ENCODE measurements at regions of chr6 and their contacts with region 1.

Region 1: GRCh38 chr6:47309291-47310130 is at the start of gene TNFRSF21:
- DNase-seq: peak; percentile 87 to 94 (median 93)
- H3K4me3 ChIP-seq: peak within 1 kb of the TSS; percentile 71 to 90 (median 84)
- H3K27ac ChIP-seq: no peak within 1 kb of the TSS
- H3K4me1 ChIP-seq: peaks cover 9 to 18% (median 13%) of the 10 kb centered on the region in 4 experiments
- H3K27me3 ChIP-seq: no peaks in the 10 kb centered on the region

Region 2: DNA sequence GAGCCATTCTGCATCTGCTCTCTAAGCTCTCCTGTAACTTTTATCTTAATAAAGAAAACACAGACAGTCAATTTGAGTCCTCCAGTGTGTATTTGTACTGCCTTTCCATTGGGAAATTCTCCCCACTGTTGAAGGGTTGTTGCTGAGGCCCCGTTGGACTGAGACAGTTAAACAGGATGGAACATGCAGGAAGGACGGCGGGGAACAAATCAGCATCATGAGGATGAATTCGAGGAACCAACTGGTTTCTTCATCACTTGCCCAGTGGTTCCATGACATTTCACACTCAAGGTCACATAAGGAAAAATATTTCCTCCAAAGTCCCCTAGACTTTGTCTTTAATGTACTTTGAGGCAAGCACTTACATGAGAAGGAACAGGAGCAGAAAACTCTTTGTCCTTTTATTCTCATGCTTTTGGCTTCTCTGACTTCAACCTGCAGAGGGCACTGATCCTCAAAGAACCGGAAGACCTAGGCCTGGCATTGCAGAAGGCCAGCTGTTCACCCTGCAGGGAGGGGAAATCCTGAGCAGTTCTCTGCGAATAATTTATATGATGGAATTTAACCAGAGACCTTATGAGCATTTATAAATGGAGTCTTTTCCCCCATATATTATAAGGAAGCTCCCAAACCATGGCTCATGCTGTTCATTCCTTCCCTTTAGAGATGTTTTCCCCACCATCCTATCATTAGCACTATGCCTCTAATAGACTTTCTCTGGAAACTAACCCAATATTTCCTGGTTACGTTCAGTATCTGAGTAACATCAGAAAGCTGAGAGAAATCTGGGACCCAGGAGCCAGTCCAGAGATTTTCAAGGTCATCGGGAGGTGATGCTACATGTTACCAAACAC is 212.2 kb before region 1 on chr6:
- CTCF ChIA-PET with region 1: interaction called, 30 read pairs
- POLR2A ChIA-PET with region 1: no interaction called
- DNase-seq: peak; percentile 74 to 90 (median 90)
- H3K4me3 ChIP-seq: no peak overlapping the region
- H3K27ac ChIP-seq: no peak overlapping the region
- H3K4me1 ChIP-seq: peaks cover 0 to 22% (median 17%) of the 10 kb centered on the region in 4 experiments
- H3K27me3 ChIP-seq: no peaks in the 10 kb centered on the region

Region 3: DNA sequence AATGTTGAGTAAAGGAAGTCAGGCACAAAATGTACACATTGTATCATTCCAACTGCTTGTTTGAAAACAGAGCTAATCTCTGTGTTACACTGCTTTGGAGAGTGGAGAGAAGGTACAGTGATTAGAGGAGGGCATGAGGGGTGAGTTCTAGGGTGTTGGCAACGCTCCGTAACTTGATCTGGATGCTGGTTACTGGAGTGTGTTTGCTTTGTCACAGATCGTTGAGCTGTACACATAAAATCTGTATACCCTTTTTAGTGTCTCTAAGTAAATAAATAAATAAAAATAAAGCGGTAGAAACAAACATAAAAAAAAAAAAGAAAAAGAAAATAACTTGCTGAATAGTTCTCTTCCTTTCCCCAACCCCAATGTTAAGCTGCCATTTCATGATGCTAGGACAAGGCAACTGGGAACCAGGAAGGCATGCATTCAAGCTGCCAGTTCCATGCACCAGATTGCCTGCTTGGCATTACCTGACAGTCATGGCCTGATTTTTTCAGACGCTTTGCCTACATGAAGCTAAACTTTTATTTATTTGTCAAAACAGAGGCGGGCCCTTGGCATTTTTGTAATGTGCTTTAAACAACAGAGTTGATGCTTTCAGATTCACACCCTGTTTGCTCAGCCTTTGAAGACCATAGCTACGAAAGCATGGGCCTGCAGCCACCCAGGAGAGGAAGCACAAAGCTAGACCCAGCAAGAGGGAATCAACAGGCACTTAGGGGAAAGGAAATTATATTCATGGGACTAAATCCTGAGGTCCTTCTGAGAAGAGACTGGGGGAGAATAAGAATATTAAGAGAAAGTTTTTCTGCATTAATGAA is 21.0 kb before region 1 on chr6:
- CTCF ChIA-PET with region 1: no interaction called
- POLR2A ChIA-PET with region 1: no interaction called
- DNase-seq: no peak
- H3K4me3 ChIP-seq: no peak overlapping the region
- H3K27ac ChIP-seq: no peak overlapping the region
- H3K4me1 ChIP-seq: no peaks in the 10 kb centered on the region
- H3K27me3 ChIP-seq: no peaks in the 10 kb centered on the region

Region 4: GRCh38 chr6:47571488-47571887 is 262.0 kb after region 1 on chr6:
- CTCF ChIA-PET with region 1: no interaction called
- POLR2A ChIA-PET with region 1: no interaction called
- DNase-seq: no peak
- H3K4me3 ChIP-seq: no peak overlapping the region
- H3K27ac ChIP-seq: no peak overlapping the region
- H3K4me1 ChIP-seq: no peaks in the 10 kb centered on the region
- H3K27me3 ChIP-seq: no peaks in the 10 kb centered on the region